ENCODE measurements at regions of chr4 and their contacts with region 1.

Region 1: DNA sequence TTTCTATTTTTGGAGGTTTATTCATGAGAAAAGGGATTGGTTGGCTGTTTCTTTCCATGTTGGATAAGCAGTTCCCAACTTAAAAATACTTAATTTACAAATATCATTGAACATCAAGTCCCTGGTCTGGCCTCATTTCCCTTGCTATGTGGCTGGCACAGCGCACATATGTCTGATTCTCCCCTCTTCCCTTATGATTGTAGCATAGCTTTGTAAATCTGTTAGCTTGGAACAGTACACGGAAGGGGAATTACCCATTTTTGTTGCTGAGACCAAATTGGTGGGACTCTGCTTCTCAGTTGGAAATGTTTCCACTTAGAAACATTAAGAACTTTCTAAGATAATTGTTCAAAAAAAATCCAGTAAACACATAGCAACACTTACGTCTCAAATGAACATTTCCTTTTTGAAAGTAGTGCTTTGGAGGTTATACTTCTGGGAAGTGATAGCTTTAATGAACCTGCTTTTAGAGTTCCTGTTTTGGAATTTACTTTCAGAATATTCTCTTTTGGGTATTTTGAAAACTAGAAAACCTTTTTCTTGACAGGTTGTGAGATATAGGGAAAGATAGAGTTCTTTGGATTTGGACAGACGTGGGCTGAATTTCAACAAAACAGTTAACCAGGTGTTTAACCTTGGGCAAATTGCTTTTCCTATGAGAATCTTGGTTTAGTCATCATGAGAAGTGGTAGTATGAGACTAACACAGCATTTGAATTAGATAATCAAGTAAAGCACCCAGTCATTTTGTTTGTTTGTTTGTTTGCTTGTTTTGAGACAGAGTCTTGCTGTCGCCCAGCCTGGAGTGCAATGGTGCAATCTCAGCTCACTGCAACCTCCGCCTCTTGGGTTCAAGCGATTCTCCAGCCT is 47.3 kb downstream of the STIM2 start:
- DNase-seq: no peak
- H3K4me3 Mint-ChIP-seq: peak overlapping the region; percentile 59
- H3K27ac Mint-ChIP-seq: peak overlapping the region; percentile 85
- H3K4me1 Mint-ChIP-seq: peaks cover 76% of the 10 kb centered on the region
- H3K27me3 Mint-ChIP-seq: no peaks in the 10 kb centered on the region

Region 2: GRCh38 chr4:26873391-26874026 is 34.5 kb before region 1 on chr4:
- intact Hi-C with region 1: loop called (anchors 1 kb)
- DNase-seq: peak; percentile 62
- H3K4me3 Mint-ChIP-seq: peak overlapping the region; percentile 61
- H3K27ac Mint-ChIP-seq: peak overlapping the region; percentile 86
- H3K4me1 Mint-ChIP-seq: peaks cover 77% of the 10 kb centered on the region
- H3K27me3 Mint-ChIP-seq: no peaks in the 10 kb centered on the region

Region 3: GRCh38 chr4:26878794-26879391 is 29.1 kb before region 1 on chr4:
- intact Hi-C with region 1: loop called (anchors 1 kb)
- DNase-seq: no peak
- H3K4me3 Mint-ChIP-seq: peak overlapping the region; percentile 20
- H3K27ac Mint-ChIP-seq: peak overlapping the region; percentile 89
- H3K4me1 Mint-ChIP-seq: peaks cover 78% of the 10 kb centered on the region
- H3K27me3 Mint-ChIP-seq: no peaks in the 10 kb centered on the region

Region 4: GRCh38 chr4:26896636-26897035 is 11.3 kb before region 1 on chr4:
- intact Hi-C with region 1: no loop called
- DNase-seq: no peak
- H3K4me3 Mint-ChIP-seq: no peak overlapping the region
- H3K27ac Mint-ChIP-seq: no peak overlapping the region
- H3K4me1 Mint-ChIP-seq: peaks cover 49% of the 10 kb centered on the region
- H3K27me3 Mint-ChIP-seq: no peaks in the 10 kb centered on the region

Region 5: DNA sequence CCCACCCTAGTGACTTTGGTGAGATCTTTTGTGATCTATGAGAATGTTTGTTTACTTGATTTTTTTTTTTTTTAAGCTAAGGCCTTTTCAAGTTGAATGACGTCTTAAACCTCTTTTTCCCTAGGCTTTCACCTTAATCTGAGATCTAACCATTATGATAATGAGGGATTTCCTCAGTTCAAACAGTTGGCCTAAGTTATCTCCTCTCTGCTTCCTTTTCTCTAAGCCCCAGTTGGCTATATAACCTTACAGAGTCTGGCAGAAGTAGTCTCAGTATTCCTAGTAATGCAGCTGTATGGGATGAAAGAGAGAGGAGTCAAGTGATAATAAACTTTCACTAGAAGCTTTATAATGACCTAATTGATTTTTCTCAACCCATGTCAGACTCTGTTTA is 51.7 kb after region 1 on chr4:
- intact Hi-C with region 1: loop called (anchors 1 kb)
- DNase-seq: no peak
- H3K4me3 Mint-ChIP-seq: no peak overlapping the region
- H3K27ac Mint-ChIP-seq: peak overlapping the region; percentile 18
- H3K4me1 Mint-ChIP-seq: peaks cover 46% of the 10 kb centered on the region
- H3K27me3 Mint-ChIP-seq: no peaks in the 10 kb centered on the region

Region 6: GRCh38 chr4:26992657-26993361 is 84.8 kb after region 1 on chr4:
- intact Hi-C with region 1: loop called (anchors 2 kb)
- DNase-seq: no peak
- H3K4me3 Mint-ChIP-seq: no peak overlapping the region
- H3K27ac Mint-ChIP-seq: no peak overlapping the region
- H3K4me1 Mint-ChIP-seq: peaks cover 24% of the 10 kb centered on the region
- H3K27me3 Mint-ChIP-seq: no peaks in the 10 kb centered on the region

Region 7: DNA sequence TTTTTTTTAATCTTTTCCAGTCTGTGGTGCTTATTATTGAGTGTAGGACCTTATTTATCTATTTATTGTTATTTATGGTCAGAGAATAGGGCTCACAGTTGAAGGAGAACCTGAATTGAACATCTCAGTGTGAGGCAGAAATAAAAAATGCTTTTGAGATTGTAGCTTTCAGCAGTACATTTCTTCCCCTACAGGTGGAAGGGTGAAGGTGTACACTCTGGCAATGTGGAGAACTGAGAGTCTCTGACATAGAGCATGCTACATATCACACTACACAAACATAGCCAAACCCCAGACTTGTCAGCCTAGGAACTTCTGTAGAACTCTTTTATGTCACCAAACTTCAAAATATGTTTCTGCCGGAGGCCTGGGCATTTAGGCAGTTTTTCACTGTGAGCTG is 92.9 kb after region 1 on chr4:
- intact Hi-C with region 1: loop called (anchors 2 kb)
- DNase-seq: no peak
- H3K4me3 Mint-ChIP-seq: no peak overlapping the region
- H3K27ac Mint-ChIP-seq: no peak overlapping the region
- H3K4me1 Mint-ChIP-seq: peaks cover 48% of the 10 kb centered on the region
- H3K27me3 Mint-ChIP-seq: no peaks in the 10 kb centered on the region

Measured in activated T-helper 1 cell treated with anti-CD3 and anti-CD28 coated beads, Interleukin-12 subunit alpha, Interleukin-12 subunit beta, Interleukin-2, Interleukin-4 antibody, amounts not matched to agents 30 ng/mL and 10 ng/mL and 1 ng/mL, durations not matched to agents 14 hours and 24 hours and 36 hours (primary cell).